ENCODE measurements at regions of chr18 and their contacts with region 1.

Region 1: GRCh38 chr18:48675352-48675761 is 136.5 kb downstream of the CTIF start:
- DNase-seq: peak; percentile 72
- H3K4me3 Mint-ChIP-seq: no peak overlapping the region
- H3K27ac Mint-ChIP-seq: no peak overlapping the region
- H3K4me1 Mint-ChIP-seq: peaks cover 2% of the 10 kb centered on the region
- H3K27me3 Mint-ChIP-seq: no peaks in the 10 kb centered on the region

Region 2: GRCh38 chr18:48622911-48623431 is 52.4 kb before region 1 on chr18:
- intact Hi-C with region 1: no loop called
- DNase-seq: no peak
- H3K4me3 Mint-ChIP-seq: no peak overlapping the region
- H3K27ac Mint-ChIP-seq: no peak overlapping the region
- H3K4me1 Mint-ChIP-seq: no peaks in the 10 kb centered on the region
- H3K27me3 Mint-ChIP-seq: no peaks in the 10 kb centered on the region

Region 3: GRCh38 chr18:48777026-48777743 is 101.8 kb after region 1 on chr18:
- intact Hi-C with region 1: loop called (anchors 5 kb)
- DNase-seq: peak; percentile 43
- H3K4me3 Mint-ChIP-seq: no peak overlapping the region
- H3K27ac Mint-ChIP-seq: no peak overlapping the region
- H3K4me1 Mint-ChIP-seq: peaks cover 2% of the 10 kb centered on the region
- H3K27me3 Mint-ChIP-seq: no peaks in the 10 kb centered on the region

Region 4: GRCh38 chr18:48997985-48998831 is 322.9 kb after region 1 on chr18:
- intact Hi-C with region 1: loop called (anchors 10 kb)
- DNase-seq: no peak
- H3K4me3 Mint-ChIP-seq: no peak overlapping the region
- H3K27ac Mint-ChIP-seq: no peak overlapping the region
- H3K4me1 Mint-ChIP-seq: peaks cover 15% of the 10 kb centered on the region
- H3K27me3 Mint-ChIP-seq: peaks cover 7% of the 10 kb centered on the region

Region 5: DNA sequence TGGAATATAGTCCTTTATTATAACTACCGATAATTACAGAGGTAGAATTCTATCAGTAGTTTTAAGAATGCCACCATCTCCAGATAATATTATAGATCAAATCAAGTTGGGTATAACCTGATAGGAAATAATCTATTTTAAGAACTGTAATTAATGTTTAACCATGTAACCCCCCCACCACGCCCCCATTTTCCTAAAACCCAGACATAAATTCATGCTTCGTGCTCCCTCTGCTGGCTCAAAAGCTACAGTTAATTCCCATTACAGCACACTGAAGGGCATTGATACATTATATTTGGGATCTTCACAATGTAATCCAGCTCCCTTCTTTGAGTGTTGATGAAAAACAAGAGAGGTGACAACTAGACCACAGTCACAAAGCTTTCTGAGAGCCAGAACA is 503.4 kb after region 1 on chr18:
- intact Hi-C with region 1: loop called (anchors 2 kb)
- DNase-seq: no peak
- H3K4me3 Mint-ChIP-seq: no peak overlapping the region
- H3K27ac Mint-ChIP-seq: no peak overlapping the region
- H3K4me1 Mint-ChIP-seq: peaks cover 26% of the 10 kb centered on the region
- H3K27me3 Mint-ChIP-seq: peaks cover 12% of the 10 kb centered on the region

Region 6: DNA sequence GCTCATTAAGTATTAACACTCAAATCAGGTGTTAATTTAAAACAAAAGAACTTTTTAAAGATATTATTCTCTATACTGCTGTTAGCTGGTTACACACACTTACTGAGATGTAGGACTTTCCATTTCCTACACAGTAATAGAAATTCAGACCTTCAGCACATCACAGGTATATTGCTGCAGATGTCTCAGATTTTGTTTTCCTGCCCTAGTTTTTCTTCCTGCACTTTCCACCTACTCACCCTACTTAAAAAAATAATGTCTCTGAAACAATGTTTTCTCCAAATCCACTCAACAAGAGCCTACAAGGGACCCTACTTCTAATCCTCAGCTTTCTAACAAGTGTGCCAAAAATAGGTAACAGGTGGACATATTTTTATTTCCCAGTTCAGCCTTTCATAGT is 741.2 kb after region 1 on chr18:
- intact Hi-C with region 1: loop called (anchors 5 kb)
- DNase-seq: no peak
- H3K4me3 Mint-ChIP-seq: no peak overlapping the region
- H3K27ac Mint-ChIP-seq: no peak overlapping the region
- H3K4me1 Mint-ChIP-seq: peaks cover 39% of the 10 kb centered on the region
- H3K27me3 Mint-ChIP-seq: no peaks in the 10 kb centered on the region

Region 7: GRCh38 chr18:49510393-49511115 is 835.2 kb after region 1 on chr18:
- intact Hi-C with region 1: loop called (anchors 1 kb)
- DNase-seq: peak; percentile 16
- H3K4me3 Mint-ChIP-seq: no peak overlapping the region
- H3K27ac Mint-ChIP-seq: no peak overlapping the region
- H3K4me1 Mint-ChIP-seq: no peaks in the 10 kb centered on the region
- H3K27me3 Mint-ChIP-seq: peaks cover 14% of the 10 kb centered on the region

Measured in activated T-helper 2 cell treated with anti-CD3 and anti-CD28 coated beads, Interferon-gamma antibody, Interleukin-2, Interleukin-4, amounts not matched to agents 10 μg/mL and 5 μg/mL and 100 μg/mL, durations not matched to agents 14 hours and 24 hours and 36 hours (primary cell).